ENCODE measurements at regions of chrX and their contacts with region 1.

Region 1: DNA sequence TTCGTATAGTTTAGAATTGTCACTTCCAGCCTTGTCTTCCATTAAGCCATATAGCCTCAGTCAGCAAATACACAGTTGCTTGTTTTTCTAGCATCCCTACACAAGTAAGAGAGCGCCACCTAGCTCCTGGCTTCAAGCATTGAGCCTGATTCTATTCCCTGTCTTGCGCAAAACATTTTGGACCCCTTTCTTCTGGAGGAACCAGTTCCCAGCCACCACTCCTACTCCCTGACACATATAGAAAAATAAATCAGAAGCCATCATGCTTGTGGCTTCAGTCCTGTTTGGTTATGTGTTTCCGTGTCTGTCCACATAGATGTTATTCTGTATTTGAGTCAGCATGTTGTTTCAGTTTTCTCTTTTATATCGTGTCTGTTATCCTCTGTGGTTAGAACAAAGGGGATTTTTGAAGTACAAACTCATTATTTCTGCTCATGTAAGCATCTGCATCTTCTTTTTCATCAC is 59.9 kb downstream of the GK start:
- DNase-seq: peak; percentile 31
- H3K4me3 Mint-ChIP-seq: peak overlapping the region; percentile 59
- H3K27ac Mint-ChIP-seq: peak overlapping the region; percentile 85
- H3K4me1 Mint-ChIP-seq: peaks cover 53% of the 10 kb centered on the region
- H3K27me3 Mint-ChIP-seq: no peaks in the 10 kb centered on the region

Region 2: GRCh38 chrX:30570505-30570904 is 142.6 kb before region 1 on chrX:
- intact Hi-C with region 1: loop called (anchors 1 kb)
- DNase-seq: no peak
- H3K4me3 Mint-ChIP-seq: no peak overlapping the region
- H3K27ac Mint-ChIP-seq: no peak overlapping the region
- H3K4me1 Mint-ChIP-seq: peaks cover 34% of the 10 kb centered on the region
- H3K27me3 Mint-ChIP-seq: no peaks in the 10 kb centered on the region

Region 3: GRCh38 chrX:30635630-30636029 is 77.5 kb before region 1 on chrX:
- intact Hi-C with region 1: loop called (anchors 1 kb)
- DNase-seq: no peak
- H3K4me3 Mint-ChIP-seq: no peak overlapping the region
- H3K27ac Mint-ChIP-seq: no peak overlapping the region
- H3K4me1 Mint-ChIP-seq: peaks cover 2% of the 10 kb centered on the region
- H3K27me3 Mint-ChIP-seq: no peaks in the 10 kb centered on the region

Region 4: GRCh38 chrX:30652527-30653414 is 60.3 kb before region 1 on chrX:
- intact Hi-C with region 1: loop called (anchors 1 kb)
- DNase-seq: peak; percentile 89
- H3K4me3 Mint-ChIP-seq: peak overlapping the region; percentile 95
- H3K27ac Mint-ChIP-seq: peak overlapping the region; percentile 97
- H3K4me1 Mint-ChIP-seq: peaks cover 49% of the 10 kb centered on the region
- H3K27me3 Mint-ChIP-seq: no peaks in the 10 kb centered on the region

Region 5: GRCh38 chrX:30735839-30736238 is 22.7 kb after region 1 on chrX:
- intact Hi-C with region 1: loop called (anchors 1 kb)
- DNase-seq: peak; percentile 64
- H3K4me3 Mint-ChIP-seq: no peak overlapping the region
- H3K27ac Mint-ChIP-seq: no peak overlapping the region
- H3K4me1 Mint-ChIP-seq: peaks cover 11% of the 10 kb centered on the region
- H3K27me3 Mint-ChIP-seq: no peaks in the 10 kb centered on the region

Region 6: GRCh38 chrX:30795981-30796958 is 83.2 kb after region 1 on chrX:
- intact Hi-C with region 1: no loop called
- DNase-seq: no peak
- H3K4me3 Mint-ChIP-seq: no peak overlapping the region
- H3K27ac Mint-ChIP-seq: no peak overlapping the region
- H3K4me1 Mint-ChIP-seq: no peaks in the 10 kb centered on the region
- H3K27me3 Mint-ChIP-seq: no peaks in the 10 kb centered on the region

Region 7: GRCh38 chrX:31099536-31100090 is 386.5 kb after region 1 on chrX:
- intact Hi-C with region 1: loop called (anchors 1 kb)
- DNase-seq: peak; percentile 59
- H3K4me3 Mint-ChIP-seq: no peak overlapping the region
- H3K27ac Mint-ChIP-seq: peak overlapping the region; percentile 86
- H3K4me1 Mint-ChIP-seq: peaks cover 34% of the 10 kb centered on the region
- H3K27me3 Mint-ChIP-seq: no peaks in the 10 kb centered on the region